ENCODE measurements at regions of chr12 and their contacts with region 1.

Region 1: GRCh38 chr12:116411977-116412376 is 134.5 kb upstream of the MED13L start:
- DNase-seq: no peak
- H3K4me3 ChIP-seq: no peak overlapping the region
- CTCF ChIP-seq: no peak

Region 2: GRCh38 chr12:116423094-116423493 is 11.1 kb after region 1 on chr12:
- CTCF ChIA-PET with region 1: interaction called, 12 read pairs
- POLR2A ChIA-PET with region 1: no interaction called
- DNase-seq: no peak
- H3K4me3 ChIP-seq: no peak overlapping the region
- CTCF ChIP-seq: no peak